ENCODE measurements at regions of chr2 and their contacts with region 1.

Region 1: DNA sequence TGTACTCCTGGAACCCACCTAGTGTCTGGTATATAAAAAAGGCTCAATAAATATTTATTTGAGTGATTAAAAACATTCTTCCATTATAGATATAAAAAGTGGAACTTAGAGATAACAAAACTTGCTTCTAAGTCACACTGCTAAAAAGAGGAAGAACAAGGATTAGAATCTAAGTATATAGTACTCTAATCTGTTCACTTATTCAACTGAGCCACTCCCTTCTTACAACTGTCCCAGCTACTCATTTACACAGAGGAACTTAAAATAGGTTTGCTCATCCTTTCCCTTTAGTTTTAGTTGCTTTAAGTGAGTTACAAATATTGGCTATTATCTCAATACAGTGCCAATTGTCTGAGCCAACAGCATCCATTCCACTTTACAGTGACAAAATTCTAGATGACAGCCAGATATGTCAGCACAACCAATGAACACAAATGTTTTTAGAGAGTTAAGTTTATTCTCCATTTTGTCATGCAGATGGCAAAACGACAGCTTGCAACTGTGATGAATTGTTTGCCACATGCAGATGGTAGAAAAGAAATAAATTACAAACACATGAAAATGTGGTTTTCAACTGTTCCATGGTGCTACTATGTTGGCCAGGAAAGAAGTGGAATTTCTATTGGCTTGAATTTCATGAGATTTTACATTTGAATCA is 280.7 kb upstream of the ZC3H15 start:
- DNase-seq: no peak
- ATAC-seq: no peak
- H3K4me3 ChIP-seq: no peak overlapping the region
- H3K4me3 Mint-ChIP-seq: no peak overlapping the region
- H3K27ac ChIP-seq: no peak overlapping the region
- H3K27ac Mint-ChIP-seq: no peak overlapping the region
- H3K4me1 ChIP-seq: no peaks in the 10 kb centered on the region
- H3K4me1 Mint-ChIP-seq: no peaks in the 10 kb centered on the region
- H3K27me3 ChIP-seq: no peaks in the 10 kb centered on the region
- H3K27me3 Mint-ChIP-seq: no peaks in the 10 kb centered on the region
- CTCF ChIP-seq: no peak

Region 2: DNA sequence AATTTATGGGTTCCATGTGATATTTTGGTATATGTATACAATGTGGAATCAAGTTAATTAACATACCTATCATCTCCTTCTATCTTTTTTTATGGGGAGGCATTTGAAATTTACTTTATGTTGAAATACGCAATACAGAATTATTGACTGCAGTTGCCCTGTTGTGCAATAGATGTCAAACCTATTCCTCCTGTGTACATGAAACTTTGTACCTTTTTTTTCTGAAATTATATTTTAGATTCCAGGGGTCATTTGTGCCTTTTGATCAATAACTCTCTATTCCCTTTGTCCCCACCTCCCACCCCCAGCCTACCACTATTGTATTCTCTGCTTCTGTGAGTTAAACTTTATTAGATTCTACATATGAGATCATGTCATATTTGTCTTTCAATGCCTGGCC is 96.9 kb before region 1 on chr2:
- CTCF ChIA-PET with region 1: no interaction called
- POLR2A ChIA-PET with region 1: no interaction called
- intact Hi-C with region 1: no loop called
- DNase-seq: no peak
- ATAC-seq: no peak
- H3K4me3 ChIP-seq: no peak overlapping the region
- H3K4me3 Mint-ChIP-seq: no peak overlapping the region
- H3K27ac ChIP-seq: no peak overlapping the region
- H3K27ac Mint-ChIP-seq: no peak overlapping the region
- H3K4me1 ChIP-seq: no peaks in the 10 kb centered on the region
- H3K4me1 Mint-ChIP-seq: peaks cover 19% of the 10 kb centered on the region
- H3K27me3 ChIP-seq: no peaks in the 10 kb centered on the region
- H3K27me3 Mint-ChIP-seq: no peaks in the 10 kb centered on the region
- CTCF ChIP-seq: no peak

Region 3: DNA sequence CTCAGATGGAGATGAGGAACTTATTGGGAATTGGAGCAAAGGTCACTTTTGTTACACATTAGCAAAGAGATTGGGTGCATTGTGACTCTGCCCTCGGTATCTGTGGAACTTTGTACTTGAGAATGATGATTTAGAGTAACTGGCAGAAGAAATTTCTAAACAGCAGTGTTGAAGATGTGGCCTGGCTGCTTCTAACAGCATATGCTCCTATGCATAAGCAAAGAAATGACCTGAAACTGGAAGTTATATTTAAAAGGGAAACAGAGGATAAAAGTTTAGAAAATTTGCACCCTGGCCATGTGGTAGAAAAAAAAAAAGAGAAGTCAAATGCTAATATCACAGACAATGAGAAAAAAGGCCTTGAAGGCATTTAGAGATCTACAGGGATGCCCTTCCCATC is 23.9 kb after region 1 on chr2:
- CTCF ChIA-PET with region 1: no interaction called
- POLR2A ChIA-PET with region 1: no interaction called
- intact Hi-C with region 1: loop called in 1 of 2 experiments (anchors 1 kb)
- DNase-seq: no peak
- ATAC-seq: no peak
- H3K4me3 ChIP-seq: no peak overlapping the region
- H3K4me3 Mint-ChIP-seq: no peak overlapping the region
- H3K27ac ChIP-seq: no peak overlapping the region
- H3K27ac Mint-ChIP-seq: no peak overlapping the region
- H3K4me1 ChIP-seq: no peaks in the 10 kb centered on the region
- H3K4me1 Mint-ChIP-seq: no peaks in the 10 kb centered on the region
- H3K27me3 ChIP-seq: no peaks in the 10 kb centered on the region
- H3K27me3 Mint-ChIP-seq: no peaks in the 10 kb centered on the region
- CTCF ChIP-seq: no peak

Measured in CD4-positive, alpha-beta T cell (primary cell).